ENCODE measurements at regions of chr11 and their contacts with region 1.

Region 1: DNA sequence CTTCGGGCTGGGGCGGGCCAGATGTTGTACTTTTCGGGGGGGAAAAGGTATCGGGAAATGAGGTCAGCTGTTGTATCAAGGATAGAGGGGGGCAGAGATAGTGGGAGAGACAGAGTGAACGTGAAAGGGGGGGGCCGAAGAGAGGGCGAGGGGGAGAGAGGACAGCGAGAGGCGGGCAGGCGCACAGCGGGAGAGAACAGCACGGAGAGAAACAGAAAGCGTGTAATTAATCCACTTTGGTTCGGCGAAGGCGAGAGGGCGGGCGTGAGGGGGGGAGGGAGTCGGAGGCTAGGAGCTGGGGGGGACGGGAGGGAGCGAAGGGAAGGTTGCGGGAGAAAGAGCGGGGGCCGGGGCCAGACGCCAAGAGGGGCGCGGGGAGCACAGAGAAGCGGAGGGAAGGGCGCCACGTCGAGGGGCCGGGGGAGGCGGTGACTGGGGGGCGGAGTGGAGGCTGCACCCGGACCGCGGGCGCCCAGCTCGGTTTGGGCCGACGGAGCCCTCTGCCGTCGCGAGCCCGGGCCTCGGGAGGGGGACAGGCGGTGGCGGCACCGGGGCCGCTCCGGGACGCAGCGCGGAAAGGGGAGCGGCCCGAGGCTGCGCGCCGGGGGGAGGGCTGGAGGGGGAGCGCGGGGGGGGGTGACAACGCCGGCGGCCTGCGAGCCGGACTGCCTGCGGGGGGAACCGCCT is 610 bp downstream of the IGF2 start:
- DNase-seq: no peak
- ATAC-seq: peak; percentile 10; the same call in 1 of the 2 replicates
- H3K4me3 ChIP-seq: peak overlapping the region; percentile 21 to 50
- H3K27ac ChIP-seq: no peak overlapping the region
- H3K4me1 ChIP-seq: peaks cover 8% of the 10 kb centered on the region
- H3K27me3 ChIP-seq: peaks cover 31% of the 10 kb centered on the region
- CTCF ChIP-seq: no peak

Region 2: DNA sequence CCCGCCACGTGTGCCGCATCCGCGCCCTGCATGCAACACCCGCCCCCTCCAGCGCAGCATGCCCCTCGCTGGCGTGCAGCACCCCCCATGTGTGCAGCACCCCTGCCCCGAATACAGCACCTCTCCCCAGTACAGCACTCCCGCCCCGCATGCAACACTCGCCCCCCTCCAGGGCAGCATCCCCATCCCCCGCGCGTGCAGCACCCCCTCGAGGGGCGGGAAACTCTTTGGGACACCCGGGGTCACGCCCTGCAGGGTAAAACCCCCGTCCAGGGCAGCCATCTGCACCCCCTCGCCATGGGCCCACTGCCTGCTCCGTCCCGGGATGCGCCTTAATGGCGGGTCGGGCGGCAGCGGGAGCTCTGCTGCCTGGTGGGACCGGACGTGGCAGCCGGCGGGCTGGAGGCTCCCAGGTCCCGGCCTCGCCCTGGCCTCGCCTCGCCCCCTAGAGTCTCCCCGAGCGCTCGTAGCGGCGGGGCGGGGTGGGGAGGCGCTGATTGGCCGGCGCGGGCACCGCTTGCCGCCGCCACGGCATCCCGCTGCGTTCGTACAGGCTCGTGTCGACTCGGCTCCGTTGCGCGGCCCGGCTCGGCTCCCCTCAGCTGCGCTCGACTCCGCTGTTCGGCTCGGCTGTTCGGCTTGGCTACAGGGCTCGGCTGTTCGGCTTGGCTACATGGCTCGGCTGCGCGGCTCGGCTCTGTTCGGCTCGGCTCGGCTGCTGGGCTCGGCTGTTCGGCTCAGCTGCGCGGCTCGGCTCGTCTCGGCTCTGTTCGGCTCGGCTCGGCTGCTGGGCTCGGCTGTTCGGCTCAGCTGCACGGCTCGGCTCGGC is 749.3 kb before region 1 on chr11:
- CTCF ChIA-PET with region 1: no interaction called
- POLR2A ChIA-PET with region 1: interaction called, 10 read pairs
- in situ Hi-C with region 1: no loop called
- intact Hi-C with region 1: no loop called
- DNase-seq: peak; percentile 81
- ATAC-seq: peak; percentile 97
- H3K4me3 ChIP-seq: peak overlapping the region; percentile 67 to 73
- H3K27ac ChIP-seq: peak overlapping the region; percentile 89
- H3K4me1 ChIP-seq: peaks cover 22% of the 10 kb centered on the region
- H3K27me3 ChIP-seq: no peaks in the 10 kb centered on the region
- CTCF ChIP-seq: no peak; the same call in 1 of the 2 replicates

Region 3: DNA sequence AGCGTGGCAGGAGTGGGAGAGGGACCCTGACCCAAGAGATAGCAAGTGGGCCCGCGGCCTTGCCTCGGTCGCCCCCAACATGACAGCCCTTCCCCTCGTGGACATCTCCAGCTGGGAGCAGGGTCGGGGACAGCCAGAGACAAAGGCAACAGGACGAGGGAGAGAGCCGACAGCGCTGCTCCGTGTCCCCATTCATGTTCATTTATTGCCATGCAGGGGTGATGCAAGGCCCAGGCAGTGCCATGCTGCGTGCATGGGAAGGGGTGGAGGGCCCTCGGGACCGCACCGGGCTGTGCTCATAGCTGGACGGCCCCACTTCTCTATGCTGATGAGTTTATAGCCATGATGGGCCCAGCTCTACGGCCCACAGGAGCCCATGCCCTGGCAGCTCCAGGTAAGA is 178.8 kb before region 1 on chr11:
- CTCF ChIA-PET with region 1: no interaction called
- POLR2A ChIA-PET with region 1: no interaction called
- in situ Hi-C with region 1: no loop called
- intact Hi-C with region 1: no loop called
- DNase-seq: no peak
- ATAC-seq: peak; percentile 22; the same call in 1 of the 2 replicates
- H3K4me3 ChIP-seq: no peak overlapping the region
- H3K27ac ChIP-seq: no peak overlapping the region
- H3K4me1 ChIP-seq: no peaks in the 10 kb centered on the region
- H3K27me3 ChIP-seq: no peaks in the 10 kb centered on the region
- CTCF ChIP-seq: no peak

Region 4: GRCh38 chr11:2027708-2028107 is 110.9 kb before region 1 on chr11:
- CTCF ChIA-PET with region 1: no interaction called
- POLR2A ChIA-PET with region 1: interaction called, 10 read pairs
- in situ Hi-C with region 1: no loop called
- intact Hi-C with region 1: no loop called
- DNase-seq: no peak
- ATAC-seq: peak; percentile 15
- H3K4me3 ChIP-seq: no peak overlapping the region
- H3K27ac ChIP-seq: no peak overlapping the region
- H3K4me1 ChIP-seq: no peaks in the 10 kb centered on the region
- H3K27me3 ChIP-seq: no peaks in the 10 kb centered on the region
- CTCF ChIP-seq: no peak

Region 5: DNA sequence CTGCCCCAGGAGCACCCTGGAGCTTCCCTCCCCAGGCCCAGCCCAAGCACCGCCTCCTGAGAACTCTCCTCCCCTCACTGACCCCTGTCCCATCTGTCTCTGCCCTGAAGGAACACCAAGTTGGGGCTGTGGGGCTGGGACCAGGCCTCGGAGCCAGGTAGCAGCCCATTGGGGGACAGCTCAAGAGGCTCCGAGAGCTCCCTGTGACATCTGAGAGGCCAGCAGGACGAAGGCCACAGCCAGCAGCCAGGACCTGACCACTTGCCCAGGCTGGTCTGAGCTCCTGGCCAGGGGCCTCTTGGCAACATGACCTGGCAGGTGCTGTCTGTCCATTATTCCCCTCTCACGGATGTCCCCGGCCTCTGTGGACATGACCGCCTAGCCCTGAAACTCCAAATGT is 33.1 kb before region 1 on chr11:
- CTCF ChIA-PET with region 1: no interaction called
- POLR2A ChIA-PET with region 1: no interaction called
- in situ Hi-C with region 1: no loop called
- intact Hi-C with region 1: no loop called
- DNase-seq: no peak
- ATAC-seq: no peak
- H3K4me3 ChIP-seq: no peak overlapping the region
- H3K27ac ChIP-seq: no peak overlapping the region
- H3K4me1 ChIP-seq: no peaks in the 10 kb centered on the region
- H3K27me3 ChIP-seq: no peaks in the 10 kb centered on the region
- CTCF ChIP-seq: no peak

Region 6: DNA sequence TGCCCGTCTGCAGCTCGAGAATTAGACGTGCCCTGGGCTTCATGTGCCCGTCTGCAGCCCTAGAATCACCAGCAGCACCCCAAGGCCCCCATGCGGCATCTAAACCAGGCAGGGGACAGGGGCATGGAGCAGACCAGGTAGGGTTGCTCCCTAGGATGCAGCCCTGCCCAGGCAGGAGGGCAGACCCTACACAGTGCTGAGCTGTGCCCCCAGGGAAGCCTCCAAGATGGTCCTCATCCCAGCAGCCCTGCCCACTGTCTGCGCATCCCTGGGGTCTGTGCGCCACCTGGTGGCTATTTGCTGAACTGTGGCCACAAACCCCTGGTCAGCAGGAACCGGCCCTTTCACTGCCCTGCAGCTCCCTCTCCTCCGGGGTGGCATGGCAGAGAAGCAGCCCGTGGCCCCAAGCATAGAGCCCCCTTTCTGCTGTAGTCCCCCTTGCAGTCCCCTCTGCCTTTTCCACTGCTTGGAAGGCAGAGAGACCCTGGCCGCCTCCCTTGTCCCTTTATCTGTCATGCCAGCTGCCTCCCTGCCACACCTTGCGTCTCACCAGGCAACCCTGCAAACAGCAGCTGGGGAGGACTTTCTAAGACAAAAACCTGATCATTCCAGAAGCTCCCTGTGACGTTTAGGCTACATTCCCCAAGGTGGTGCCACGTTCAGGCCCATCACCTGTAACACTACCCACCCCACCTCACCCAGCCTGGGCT is 392.9 kb after region 1 on chr11:
- CTCF ChIA-PET with region 1: no interaction called
- POLR2A ChIA-PET with region 1: no interaction called
- in situ Hi-C with region 1: no loop called
- intact Hi-C with region 1: no loop called
- DNase-seq: peak; percentile 55
- ATAC-seq: peak; percentile 71
- H3K4me3 ChIP-seq: no peak overlapping the region
- H3K27ac ChIP-seq: no peak overlapping the region
- H3K4me1 ChIP-seq: peaks cover 15% of the 10 kb centered on the region
- H3K27me3 ChIP-seq: no peaks in the 10 kb centered on the region
- CTCF ChIP-seq: peak; percentile 98

Measured in Panc1 (cell line).